ENCODE measurements at regions of chr2 and their contacts with region 1.

Region 1: DNA sequence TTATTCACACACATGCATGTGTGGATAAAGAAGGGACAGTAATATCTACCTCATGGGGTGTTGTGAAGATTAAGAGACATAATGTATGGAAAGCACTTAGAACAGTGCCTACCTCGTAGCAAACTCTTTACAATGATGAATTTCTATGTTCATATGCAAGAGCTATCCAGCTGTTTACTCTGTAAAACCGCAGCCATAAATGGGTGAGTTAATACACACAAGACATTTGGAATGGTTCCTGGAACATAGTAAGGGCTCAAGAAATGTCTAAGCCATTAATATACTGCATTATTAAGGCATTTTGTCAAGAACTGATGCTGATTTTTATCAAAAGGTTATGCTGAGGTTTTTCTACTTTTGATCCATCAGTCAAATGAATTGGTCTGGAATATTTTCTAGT is 1076.2 kb downstream of the TSN start:
- DNase-seq: no peak
- H3K4me3 ChIP-seq: no peak overlapping the region
- H3K27ac ChIP-seq: no peak overlapping the region
- H3K4me1 ChIP-seq: no peaks in the 10 kb centered on the region
- H3K27me3 ChIP-seq: no peaks in the 10 kb centered on the region
- CTCF ChIP-seq: no peak
- POLR2A ChIP-seq: no peak

Region 2: GRCh38 chr2:122816803-122817202 is 14.8 kb before region 1 on chr2:
- CTCF ChIA-PET with region 1: no interaction called
- POLR2A ChIA-PET with region 1: no interaction called
- dilution Hi-C with region 1: no loop called
- intact Hi-C with region 1: no loop called
- DNase-seq: no peak
- H3K4me3 ChIP-seq: no peak overlapping the region
- H3K27ac ChIP-seq: no peak overlapping the region
- H3K4me1 ChIP-seq: no peaks in the 10 kb centered on the region
- H3K27me3 ChIP-seq: no peaks in the 10 kb centered on the region
- CTCF ChIP-seq: no peak
- POLR2A ChIP-seq: no peak

Region 3: GRCh38 chr2:123195957-123196356 is 364.3 kb after region 1 on chr2:
- CTCF ChIA-PET with region 1: no interaction called
- POLR2A ChIA-PET with region 1: no interaction called
- dilution Hi-C with region 1: no loop called
- intact Hi-C with region 1: loop called (anchors 5 kb)
- DNase-seq: no peak
- H3K4me3 ChIP-seq: no peak overlapping the region
- H3K27ac ChIP-seq: no peak overlapping the region
- H3K4me1 ChIP-seq: no peaks in the 10 kb centered on the region
- H3K27me3 ChIP-seq: no peaks in the 10 kb centered on the region
- CTCF ChIP-seq: no peak
- POLR2A ChIP-seq: no peak

Region 4: DNA sequence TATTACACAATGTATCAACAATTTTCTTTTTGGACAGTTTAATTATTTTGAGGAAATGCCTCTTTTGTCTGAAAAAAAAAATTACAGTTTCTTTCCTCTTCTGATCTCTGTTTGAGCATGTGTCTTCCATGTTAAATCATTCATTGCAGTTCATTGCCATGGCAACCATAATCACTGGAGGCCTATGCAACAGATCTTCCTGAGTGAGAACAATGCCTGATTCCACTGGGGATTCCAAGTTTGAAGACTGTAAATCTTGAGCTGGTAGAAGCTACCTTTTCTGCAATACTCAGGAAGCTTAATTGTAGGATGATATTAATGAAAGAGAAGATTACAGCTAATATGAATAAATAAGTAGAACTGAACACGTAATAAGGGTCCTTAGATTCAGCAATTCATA is 472.1 kb after region 1 on chr2:
- CTCF ChIA-PET with region 1: no interaction called
- POLR2A ChIA-PET with region 1: no interaction called
- dilution Hi-C with region 1: no loop called
- intact Hi-C with region 1: no loop called
- DNase-seq: no peak
- H3K4me3 ChIP-seq: no peak overlapping the region
- H3K27ac ChIP-seq: no peak overlapping the region
- H3K4me1 ChIP-seq: no peaks in the 10 kb centered on the region
- H3K27me3 ChIP-seq: no peaks in the 10 kb centered on the region
- CTCF ChIP-seq: no peak
- POLR2A ChIP-seq: no peak